ENCODE measurements at regions of chr19 and their contacts with region 1.

Region 1: DNA sequence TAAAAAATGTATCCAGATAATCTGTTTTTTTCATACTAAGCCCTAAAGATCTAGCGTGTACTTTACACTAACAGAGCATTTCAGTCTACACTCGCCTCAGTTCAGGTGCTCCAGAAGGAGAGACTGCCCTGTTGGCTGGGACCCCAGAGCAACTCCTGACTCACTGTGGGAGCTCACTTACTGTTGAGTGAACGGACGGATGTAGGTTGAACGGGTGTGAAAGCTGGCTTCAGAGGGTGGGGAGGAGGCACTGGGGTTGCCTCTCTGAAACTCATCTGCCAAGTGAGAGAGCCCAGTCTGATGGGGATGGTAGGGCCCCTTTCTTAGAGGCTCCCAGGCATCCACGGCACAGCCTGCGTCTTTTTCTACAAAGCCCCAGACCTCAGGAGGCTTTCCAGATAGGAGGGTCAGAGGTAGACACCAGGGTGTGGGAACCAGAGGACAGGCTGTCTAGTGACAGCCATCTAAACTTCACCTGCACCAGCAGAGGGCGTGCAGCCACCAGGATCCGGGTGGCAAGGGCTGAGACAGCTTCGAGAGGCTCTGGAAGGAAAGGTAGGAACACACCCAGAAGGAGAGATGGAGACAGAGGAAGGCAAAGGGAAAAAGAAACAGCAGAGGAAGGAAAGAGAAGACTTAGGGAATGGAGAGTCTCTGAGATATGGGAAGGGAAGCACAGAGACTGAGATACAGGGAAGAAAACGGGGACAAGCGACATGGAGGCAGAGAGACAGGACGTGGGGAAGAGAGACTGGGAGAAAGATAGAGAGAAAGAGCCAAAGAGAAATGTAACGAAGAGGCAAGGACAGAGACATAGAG is 3.7 kb downstream of the KASH5 start:
- DNase-seq: peak; percentile 87
- ATAC-seq: peak; percentile 91
- H3K4me3 Mint-ChIP-seq: no peak overlapping the region
- H3K27ac Mint-ChIP-seq: no peak overlapping the region
- H3K4me1 Mint-ChIP-seq: peaks cover 20% of the 10 kb centered on the region
- H3K27me3 Mint-ChIP-seq: peaks cover 16% of the 10 kb centered on the region
- CTCF ChIP-seq: peak; percentile 58

Region 2: DNA sequence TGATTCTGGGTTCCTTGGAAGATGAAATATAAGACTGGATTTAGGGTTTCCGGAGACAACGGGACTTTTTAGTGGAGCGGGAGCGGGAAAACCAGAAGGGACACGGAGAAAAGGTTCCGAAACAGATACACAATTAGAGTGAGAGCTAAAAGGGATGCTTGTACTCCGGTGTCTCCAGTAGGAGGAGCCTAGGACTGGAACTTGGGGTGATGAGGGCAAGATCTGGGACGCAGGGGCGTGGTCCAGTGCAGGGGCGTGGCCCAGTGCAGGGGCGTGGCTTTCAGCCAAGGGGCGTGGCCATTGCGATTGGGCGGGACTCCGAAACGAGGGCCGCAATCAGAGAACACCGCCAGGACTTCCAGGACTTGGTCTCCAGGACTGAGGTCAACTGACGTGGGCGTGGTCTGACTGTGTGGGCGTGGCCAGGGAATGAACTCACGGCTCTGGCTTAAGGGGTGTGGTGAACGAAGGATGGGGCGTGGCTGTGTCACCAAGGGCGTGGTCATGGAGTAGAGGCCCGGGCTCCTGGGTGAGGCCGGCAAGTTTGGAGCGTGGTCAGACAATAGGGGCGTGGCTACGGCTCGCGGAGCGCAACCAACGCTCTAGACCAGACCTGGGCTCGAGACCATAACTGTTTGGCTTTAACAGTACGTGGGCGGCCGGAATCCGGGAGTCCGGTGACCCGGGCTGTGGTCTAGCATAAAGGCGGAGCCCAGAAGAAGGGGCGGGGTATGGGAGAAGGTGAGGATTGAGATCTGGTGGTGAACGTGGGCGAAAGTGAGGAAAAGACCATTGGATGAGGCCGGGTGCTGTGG is 28.3 kb before region 1 on chr19 and contains the start of gene DKKL1:
- CTCF ChIA-PET with region 1: interaction called, 17 read pairs
- POLR2A ChIA-PET with region 1: no interaction called
- DNase-seq: peak; percentile 100
- ATAC-seq: peak; percentile 88
- H3K4me3 Mint-ChIP-seq: no peak within 1 kb of the TSS
- H3K27ac Mint-ChIP-seq: no peak within 1 kb of the TSS
- H3K4me1 Mint-ChIP-seq: peaks cover 8% of the 10 kb centered on the region
- H3K27me3 Mint-ChIP-seq: peaks cover 5% of the 10 kb centered on the region
- CTCF ChIP-seq: no peak
- total RNA-seq, gene DKKL1: 2.4 to 3.0 TPM (median 2.9 TPM) in 3 replicates

Region 3: GRCh38 chr19:49415102-49415809 is 23.5 kb after region 1 on chr19:
- CTCF ChIA-PET with region 1: interaction called, 120 read pairs
- POLR2A ChIA-PET with region 1: no interaction called
- DNase-seq: no peak
- ATAC-seq: no peak
- H3K4me3 Mint-ChIP-seq: no peak overlapping the region
- H3K27ac Mint-ChIP-seq: no peak overlapping the region; the same call in 1 of the 2 replicates
- H3K4me1 Mint-ChIP-seq: peaks cover 55% of the 10 kb centered on the region
- H3K27me3 Mint-ChIP-seq: peaks cover 27% of the 10 kb centered on the region
- CTCF ChIP-seq: no peak

Region 4: DNA sequence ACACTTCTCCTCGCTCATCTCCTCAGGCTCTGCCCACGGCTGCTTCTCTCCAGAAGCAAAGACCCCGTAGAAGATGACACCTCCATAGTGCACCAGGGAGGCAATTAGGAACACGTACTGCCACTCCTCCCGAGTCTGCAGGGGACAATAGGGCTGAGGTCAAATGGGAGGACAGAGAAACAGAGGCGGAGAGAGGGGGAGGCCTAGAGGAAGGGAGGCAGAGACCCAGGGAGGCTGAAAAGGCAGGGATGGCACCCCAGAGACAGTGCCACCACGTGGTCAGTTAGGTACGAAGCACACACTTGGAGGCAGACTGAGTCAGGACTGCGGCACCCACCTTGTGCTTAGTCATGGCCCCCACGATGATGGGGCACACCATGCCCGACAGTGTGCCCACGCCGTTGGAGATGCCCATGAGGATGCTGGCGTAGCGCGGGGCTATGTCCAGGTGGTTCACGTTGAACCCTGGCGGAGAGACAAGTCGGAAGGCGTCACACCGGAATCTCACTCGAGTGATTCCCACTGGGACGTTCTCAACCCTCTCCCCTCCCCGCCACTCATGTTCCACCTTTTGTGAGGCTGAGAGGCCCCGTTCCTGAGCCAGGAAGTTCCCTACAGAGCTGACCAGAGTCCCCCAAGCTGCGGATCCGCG is 39.0 kb after region 1 on chr19:
- CTCF ChIA-PET with region 1: interaction called, 28 read pairs
- POLR2A ChIA-PET with region 1: no interaction called
- DNase-seq: no peak
- ATAC-seq: no peak
- H3K4me3 Mint-ChIP-seq: no peak overlapping the region
- H3K27ac Mint-ChIP-seq: no peak overlapping the region
- H3K4me1 Mint-ChIP-seq: peaks cover 58% of the 10 kb centered on the region
- H3K27me3 Mint-ChIP-seq: peaks cover 98% of the 10 kb centered on the region
- CTCF ChIP-seq: peak; percentile 21; the same call in 1 of the 2 replicates

Region 5: DNA sequence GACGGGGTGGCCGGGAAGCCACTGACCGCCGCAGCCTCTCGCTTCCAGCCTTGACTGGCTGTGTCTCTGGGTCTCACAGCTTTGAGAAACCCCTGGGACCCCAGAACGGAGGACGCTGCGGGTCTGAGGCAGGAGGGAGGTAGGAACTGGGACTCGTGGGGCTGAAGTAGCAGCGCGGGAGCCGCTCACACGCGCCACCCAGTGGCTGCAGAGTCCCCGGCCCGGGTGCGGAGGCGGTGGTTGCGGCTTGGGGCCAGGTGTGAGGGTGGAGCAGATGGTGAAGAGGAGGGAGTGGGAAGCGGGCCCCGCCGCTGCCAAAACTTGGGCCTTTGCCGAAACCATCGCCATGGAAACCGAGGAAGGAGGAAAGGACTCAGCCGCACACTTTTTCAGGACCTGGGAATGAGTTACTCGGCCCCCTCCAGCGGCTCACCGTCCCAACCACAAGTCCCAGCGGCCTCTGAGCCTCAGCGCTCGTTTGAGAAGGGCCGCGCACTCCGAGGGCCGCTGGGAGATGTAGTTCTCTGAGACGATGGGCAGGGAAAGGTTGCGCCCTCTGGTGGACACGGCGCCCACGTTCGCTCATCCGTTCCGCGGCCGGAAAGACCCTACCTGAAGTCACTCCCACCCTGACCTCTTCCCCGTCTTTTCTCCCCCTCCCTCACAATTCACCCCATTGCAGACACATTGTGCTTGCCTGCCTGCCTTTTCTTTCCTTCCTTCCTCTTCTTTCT is 51.7 kb after region 1 on chr19:
- CTCF ChIA-PET with region 1: interaction called, 33 read pairs
- POLR2A ChIA-PET with region 1: interaction called, 5 read pairs
- DNase-seq: peak; percentile 97
- ATAC-seq: peak; percentile 43
- H3K4me3 Mint-ChIP-seq: peak overlapping the region; percentile 63
- H3K27ac Mint-ChIP-seq: no peak overlapping the region
- H3K4me1 Mint-ChIP-seq: peaks cover 35% of the 10 kb centered on the region
- H3K27me3 Mint-ChIP-seq: peaks cover 39% of the 10 kb centered on the region
- CTCF ChIP-seq: peak; percentile 79